ENCODE measurements at regions of chr10 and their contacts with region 1.

Region 1: DNA sequence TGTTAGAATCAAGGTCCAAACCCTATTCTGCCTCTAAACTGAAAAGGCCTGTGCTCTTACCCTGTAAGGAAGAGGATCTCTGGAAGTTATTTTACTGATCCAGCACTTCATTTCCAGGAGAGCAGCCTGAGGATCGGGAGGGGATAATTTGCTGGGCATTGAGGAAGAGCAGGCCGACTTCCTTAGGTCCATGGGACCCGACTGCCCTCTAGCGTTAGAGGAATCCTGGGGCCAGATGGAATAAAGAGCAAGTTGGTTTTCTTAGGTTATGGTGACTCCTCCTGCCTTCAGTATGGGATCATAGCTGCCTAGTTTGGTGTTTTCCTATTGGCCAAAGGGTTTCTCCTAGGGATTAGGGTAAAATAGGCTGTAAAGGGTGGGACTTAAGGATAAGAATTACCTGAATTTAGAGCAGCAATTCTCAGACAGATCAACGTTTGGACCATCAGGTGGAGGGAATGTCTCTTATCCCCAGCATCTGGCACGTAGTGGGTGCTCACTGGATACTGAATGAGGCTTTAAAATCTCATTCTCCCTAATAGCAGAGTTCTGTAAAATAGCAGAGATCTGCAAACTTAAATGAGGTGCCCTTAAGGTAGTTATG is 40.0 kb upstream of the SORBS1 start:
- DNase-seq: peak; percentile 67
- CTCF ChIP-seq: peak; percentile 75

Region 2: GRCh38 chr10:95183271-95184230 is 417.7 kb before region 1 on chr10:
- in situ Hi-C with region 1: loop called (anchors 25 kb)
- DNase-seq: peak; percentile 96
- CTCF ChIP-seq: peak; percentile 99

Region 3: DNA sequence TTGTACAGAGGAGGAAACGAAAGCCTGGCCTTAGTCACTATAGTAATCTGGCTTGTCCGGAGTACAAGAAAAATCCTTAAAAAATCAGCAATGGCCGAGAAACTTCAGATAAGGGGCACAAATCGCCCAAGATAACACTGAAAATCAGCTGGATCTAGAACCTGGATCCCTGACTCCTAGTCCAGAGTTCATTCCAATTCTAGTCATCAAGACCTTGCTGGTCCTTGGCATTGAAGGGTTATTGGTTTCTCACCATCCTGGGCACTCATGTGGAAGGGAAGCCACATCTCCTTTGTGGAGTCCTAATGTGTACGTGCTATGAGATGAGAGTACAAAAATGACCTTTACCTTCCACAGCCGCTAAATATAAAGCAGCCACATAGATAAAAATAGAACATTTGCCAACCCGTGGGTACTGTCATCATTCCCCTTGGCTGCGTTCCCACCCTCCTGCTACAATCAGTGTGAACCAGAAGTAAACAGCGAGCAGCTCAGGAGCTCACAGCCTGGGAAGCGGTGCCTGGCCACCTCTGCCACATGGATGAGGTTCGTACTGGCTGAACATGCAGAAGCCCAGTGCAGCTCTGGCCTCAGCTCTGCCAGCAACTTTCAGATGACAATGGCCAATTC is 194.5 kb before region 1 on chr10:
- in situ Hi-C with region 1: no loop called
- DNase-seq: no peak
- CTCF ChIP-seq: no peak

Measured in GM13976 (cell line).